Dendritic cell treated with granulocyte-macrophage colony-stimulating factor and Interleukin-4, amounts not matched to agents 40 ng/mL and 50 ng/mL, for 4 days (primary cell): ENCODE measurements at regions of chr2 and their contacts with region 1.

Region 1: DNA sequence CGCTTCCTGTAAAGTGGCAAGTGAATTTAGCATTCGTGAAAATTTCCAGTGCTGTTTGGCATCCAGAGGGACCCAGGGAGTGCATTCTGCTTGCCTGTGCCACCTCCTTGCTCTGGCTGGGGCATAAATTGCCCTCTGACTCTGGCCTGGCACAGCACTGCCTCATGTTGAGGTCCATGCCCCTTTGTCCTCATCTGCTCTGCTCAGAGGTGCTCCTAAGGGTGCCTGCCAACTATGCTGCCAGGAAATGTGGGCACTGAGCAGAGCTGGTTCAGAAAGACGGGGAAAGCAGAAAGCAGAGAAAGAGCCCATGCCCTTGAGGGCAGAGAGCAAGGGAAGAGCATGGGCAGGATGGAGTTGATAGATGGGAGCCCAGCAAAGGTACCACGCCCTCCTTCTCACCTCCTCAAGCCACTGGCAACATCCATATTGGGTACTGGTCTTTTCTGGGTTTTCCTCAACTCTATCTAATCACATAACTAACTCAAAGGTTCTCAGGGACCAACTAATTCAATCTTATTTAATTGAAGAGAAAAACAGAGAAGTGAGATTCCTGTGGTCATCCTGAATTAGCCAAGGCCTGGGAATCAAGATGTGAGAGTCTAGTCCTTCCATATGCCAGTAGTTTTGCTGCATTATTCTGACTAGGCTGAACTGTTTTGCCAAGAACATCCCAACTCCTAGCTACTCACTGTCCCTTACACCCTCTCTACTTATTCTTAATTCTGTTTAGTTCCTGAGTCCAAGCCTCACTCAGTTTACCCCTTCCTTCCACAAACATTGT is 441.5 kb upstream of the TNP1 start:
- H3K4me3 Mint-ChIP-seq: no peak overlapping the region
- H3K27ac Mint-ChIP-seq: no peak overlapping the region
- H3K4me1 Mint-ChIP-seq: peaks cover 11% of the 10 kb centered on the region
- H3K27me3 Mint-ChIP-seq: peaks cover 87% of the 10 kb centered on the region

Region 2: DNA sequence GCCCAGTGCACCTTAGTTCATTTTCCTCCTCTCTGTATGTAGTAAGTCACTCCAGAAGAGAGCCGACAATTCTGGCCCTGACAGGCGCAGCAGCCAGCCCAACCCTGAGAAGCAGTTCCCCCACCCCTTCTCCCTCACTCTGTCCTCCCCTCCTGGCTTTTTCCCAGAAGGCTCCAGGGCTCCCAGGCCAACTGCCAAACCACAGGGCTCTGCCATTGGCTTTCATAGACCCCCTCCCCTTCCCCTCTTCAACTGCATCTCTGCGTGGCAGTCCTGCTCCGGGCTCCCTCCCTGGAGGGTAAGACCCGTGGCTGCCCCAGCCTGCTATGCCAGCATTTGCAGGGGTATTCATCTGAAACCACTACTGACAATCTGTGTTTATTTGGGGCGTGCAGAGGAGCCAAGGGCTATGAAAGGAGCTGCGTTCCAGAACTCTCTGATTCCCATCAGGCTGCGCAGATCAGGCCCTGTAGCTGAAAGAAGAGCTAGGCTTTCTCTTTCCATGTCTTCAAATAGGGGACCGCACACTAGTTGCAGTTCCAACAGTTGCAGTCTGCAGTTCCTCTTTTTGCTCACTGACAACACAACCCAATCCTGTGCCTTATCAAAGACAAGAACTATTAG is 52.9 kb before region 1 on chr2:
- intact Hi-C with region 1: loop called (anchors 5 kb)
- H3K4me3 Mint-ChIP-seq: no peak overlapping the region
- H3K27ac Mint-ChIP-seq: no peak overlapping the region
- H3K4me1 Mint-ChIP-seq: no peaks in the 10 kb centered on the region
- H3K27me3 Mint-ChIP-seq: peaks cover 41% of the 10 kb centered on the region